Left lung (tissue), 14 donors: ENCODE measurements at regions of chr3 and their contacts with region 1.

Region 1: DNA sequence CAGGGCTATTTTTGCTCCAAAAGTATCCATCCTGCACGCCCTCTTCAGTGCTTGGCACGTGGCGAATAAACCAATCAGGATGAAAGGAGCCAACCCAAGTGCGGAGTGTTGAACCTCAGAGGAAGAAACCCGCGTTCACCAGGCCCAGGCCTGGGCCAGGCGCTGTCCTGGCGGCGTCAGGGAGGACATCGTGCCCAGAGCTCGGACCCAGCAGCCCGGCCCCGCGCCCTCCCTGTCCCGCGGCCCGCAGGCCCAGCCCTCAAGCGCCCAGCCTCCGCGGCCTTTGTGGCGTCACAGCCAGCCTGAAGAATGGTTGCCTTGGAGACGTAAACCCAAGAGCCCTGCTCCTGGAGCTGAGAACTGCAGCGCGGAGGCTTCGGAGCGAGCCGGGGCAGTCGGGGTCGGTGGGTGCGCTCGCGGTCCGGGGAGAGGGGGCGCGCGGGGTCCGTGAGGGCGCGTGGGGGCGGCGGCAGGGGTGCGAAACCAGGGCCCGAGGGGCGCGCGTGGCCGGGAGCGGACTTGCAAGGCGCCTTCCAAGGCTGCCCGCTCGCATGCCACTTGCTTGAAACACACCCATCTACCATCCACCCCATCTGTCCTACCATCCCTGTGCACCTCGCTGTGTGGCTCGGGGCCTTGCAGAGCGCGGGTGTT is at the start of gene CFAP100:
- DNase-seq: peak; percentile 62 to 85 (median 75)
- ATAC-seq: peak; percentile 90
- H3K4me3 ChIP-seq: peak within 1 kb of the TSS in 1 of 2 donors; percentile 11
- H3K27ac ChIP-seq: no peak within 1 kb of the TSS
- H3K4me1 ChIP-seq: peaks cover 0 to 10% of the 10 kb centered on the region in 2 donors
- H3K27me3 ChIP-seq: peaks cover 10 to 57% of the 10 kb centered on the region in 2 donors
- CTCF ChIP-seq: no peak
- polyA plus RNA-seq, gene CFAP100: 1.0 to 7.9 (median 5.6) TPM

Region 2: DNA sequence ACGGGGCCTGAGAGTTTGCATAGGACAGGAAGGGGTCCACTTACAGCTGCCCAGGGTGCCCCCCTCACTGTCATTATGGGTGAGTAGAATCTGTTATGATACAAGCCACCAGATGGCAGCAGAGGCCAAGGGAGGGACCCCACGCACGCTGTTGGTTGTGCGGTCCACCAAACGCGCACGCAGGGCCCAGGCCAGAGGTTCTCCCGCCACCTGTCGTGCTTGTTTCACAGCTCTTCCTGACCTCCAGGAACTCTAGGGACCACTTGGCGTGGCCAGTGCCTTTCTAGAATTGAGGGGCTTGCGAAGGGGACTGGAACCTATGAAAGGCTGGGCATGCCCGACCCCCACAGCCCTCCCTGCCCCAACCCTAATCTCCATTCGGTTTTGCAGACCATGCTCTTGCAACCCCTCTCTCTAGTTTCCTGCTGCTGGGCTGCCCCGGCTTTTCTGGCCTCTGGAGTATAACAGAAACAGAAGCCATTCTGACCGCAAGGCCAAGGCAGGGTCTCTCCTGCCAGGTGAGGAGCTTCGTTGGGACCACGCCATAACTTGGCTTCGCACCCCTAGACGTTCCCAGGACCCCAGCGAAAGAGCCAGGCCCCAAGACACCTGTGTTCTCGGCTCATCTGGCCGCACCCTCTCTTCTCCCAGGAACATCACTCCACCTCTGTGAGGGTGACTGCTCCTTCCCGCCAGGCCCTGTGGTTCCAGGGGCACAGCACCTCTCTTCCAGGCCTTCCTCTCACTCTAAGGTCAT is 260.3 kb before region 1 on chr3:
- intact Hi-C with region 1: loop called in 1 of 2 experiments (anchors 5 kb)
- DNase-seq: peak; percentile 33 to 79 (median 62)
- ATAC-seq: peak; percentile 78
- H3K4me3 ChIP-seq: no peak overlapping the region
- H3K27ac ChIP-seq: no peak overlapping the region
- H3K4me1 ChIP-seq: peaks cover 0 to 6% of the 10 kb centered on the region in 2 donors
- H3K27me3 ChIP-seq: peaks cover 0 to 12% of the 10 kb centered on the region in 2 donors
- CTCF ChIP-seq: peak; percentile 60 to 76

Region 3: DNA sequence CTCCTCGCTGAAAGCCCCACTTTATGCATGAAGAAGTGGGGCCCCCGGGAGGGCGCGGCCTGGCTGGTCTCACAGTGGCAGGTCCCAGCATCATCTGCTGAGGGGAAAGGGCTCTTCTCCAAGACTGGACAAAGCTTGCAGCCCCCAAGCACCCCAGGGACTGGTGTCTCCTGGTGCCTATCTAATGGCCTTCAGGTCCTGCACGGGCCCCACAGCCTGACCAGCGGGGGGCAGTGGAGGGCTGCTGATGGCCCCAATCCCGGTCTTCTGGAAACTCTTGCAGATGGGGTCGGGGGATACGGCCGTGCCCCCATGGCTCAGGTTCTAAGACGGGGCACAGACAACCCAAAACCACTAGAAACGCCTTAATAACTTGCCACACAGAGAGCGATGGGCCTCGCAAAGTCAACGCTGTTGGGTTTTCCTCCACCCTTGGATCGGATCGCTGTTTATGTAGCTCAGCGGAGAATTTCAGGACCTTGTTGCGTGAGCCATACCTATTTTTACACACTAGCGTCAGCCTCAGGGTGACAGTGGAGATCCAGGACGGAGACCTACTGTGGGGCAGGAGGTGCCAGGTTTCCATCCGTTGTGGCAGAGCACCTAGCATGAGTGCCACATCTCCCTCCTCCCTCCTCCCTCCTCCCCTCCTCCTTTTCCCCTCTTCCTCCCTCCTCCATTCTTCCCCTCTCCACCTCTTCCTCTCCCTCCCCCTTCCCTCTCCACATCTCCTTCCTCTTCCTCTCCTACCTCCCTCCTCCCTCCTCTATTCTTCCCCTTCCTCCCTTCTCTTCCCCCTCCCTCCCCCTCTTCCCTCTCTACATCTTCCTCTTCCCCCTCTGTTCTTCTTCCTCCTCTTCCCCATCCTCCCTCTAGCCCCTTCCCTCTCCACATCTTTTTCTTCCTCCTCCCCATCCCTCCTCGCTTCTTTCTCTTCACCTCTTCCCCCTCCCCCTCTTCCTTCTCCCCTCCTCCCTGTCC is 135.0 kb before region 1 on chr3:
- intact Hi-C with region 1: loop called in 1 of 2 experiments (anchors 5 kb)
- DNase-seq: peak in 1 of 4 donors; percentile 53
- ATAC-seq: peak; percentile 91
- H3K4me3 ChIP-seq: no peak overlapping the region
- H3K27ac ChIP-seq: no peak overlapping the region
- H3K4me1 ChIP-seq: peaks cover 0 to 9% of the 10 kb centered on the region in 2 donors
- H3K27me3 ChIP-seq: peaks cover 0 to 3% of the 10 kb centered on the region in 2 donors
- CTCF ChIP-seq: peak; percentile 67 to 69

Region 4: DNA sequence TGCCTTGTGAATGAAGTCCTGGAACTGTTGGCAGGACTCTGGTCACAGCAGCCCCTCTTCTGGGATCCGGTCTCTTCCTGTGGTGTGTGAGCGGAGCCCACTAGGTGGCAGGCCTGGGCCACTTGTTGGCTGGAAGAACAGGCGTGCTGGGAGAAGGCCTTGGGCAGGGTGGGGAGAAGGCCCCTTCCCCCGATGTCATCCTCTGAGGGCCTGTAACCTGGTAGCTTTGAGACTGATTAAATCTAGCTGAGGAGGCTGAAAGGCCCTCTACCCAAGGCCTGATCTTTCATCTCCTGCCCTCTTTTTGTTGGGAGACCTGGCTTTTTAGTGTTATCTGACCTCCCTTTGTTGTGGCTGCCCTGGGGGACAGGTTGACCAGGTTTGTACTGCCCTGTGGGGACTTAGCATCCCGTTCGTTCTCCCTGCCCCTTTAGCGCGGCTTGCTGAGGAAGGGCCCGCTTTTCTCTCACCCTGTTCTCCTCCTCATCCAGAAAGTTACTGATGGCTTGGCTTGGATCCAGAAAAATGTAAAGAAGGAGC is 357.7 kb after region 1 on chr3:
- intact Hi-C with region 1: no loop called
- DNase-seq: peak; percentile 73 to 89 (median 82)
- ATAC-seq: peak; percentile 88
- H3K4me3 ChIP-seq: no peak overlapping the region
- H3K27ac ChIP-seq: peak overlapping the region in 1 of 2 donors; percentile 28
- H3K4me1 ChIP-seq: peaks cover 4 to 10% of the 10 kb centered on the region in 2 donors
- H3K27me3 ChIP-seq: no peaks in the 10 kb centered on the region
- CTCF ChIP-seq: peak; percentile 75 to 76